ENCODE measurements at regions of chr13 and their contacts with region 1.

Region 1: DNA sequence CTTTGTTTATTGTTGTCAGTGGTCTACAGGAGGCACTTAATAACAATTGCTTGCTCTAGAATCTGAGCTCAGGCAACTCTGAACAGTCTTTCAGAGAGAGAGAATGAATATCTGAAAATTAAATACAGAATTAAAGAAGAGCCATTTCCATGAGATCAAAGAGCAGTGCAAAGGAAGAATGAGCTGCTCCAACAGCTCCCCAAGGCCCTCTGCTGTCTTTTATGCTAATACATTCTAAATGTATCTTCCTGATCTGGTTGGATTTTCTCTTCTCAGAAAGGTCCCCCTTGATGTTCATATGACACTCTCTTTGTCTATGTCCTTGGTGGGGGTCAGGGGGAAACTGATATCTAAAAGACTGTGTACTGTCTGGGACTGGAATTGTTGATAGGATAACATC is 1029.6 kb downstream of the PCDH9 start:
- DNase-seq: no peak
- ATAC-seq: peak; percentile 43
- H3K4me3 ChIP-seq: no peak overlapping the region
- H3K27ac ChIP-seq: no peak overlapping the region
- H3K4me1 ChIP-seq: no peaks in the 10 kb centered on the region
- H3K27me3 ChIP-seq: no peaks in the 10 kb centered on the region
- CTCF ChIP-seq: 0 out of 2 replicates have a peak, but pooled peaks have one; percentile 15

Region 2: GRCh38 chr13:65656740-65657329 is 543.7 kb before region 1 on chr13:
- CTCF ChIA-PET with region 1: no interaction called
- POLR2A ChIA-PET with region 1: no interaction called
- intact Hi-C with region 1: loop called (anchors 5 kb)
- DNase-seq: peak; percentile 37
- ATAC-seq: no peak
- H3K4me3 ChIP-seq: no peak overlapping the region
- H3K27ac ChIP-seq: no peak overlapping the region
- H3K4me1 ChIP-seq: no peaks in the 10 kb centered on the region
- H3K27me3 ChIP-seq: no peaks in the 10 kb centered on the region
- CTCF ChIP-seq: peak; percentile 65

Region 3: GRCh38 chr13:66048888-66049287 is 151.7 kb before region 1 on chr13:
- CTCF ChIA-PET with region 1: no interaction called
- POLR2A ChIA-PET with region 1: no interaction called
- intact Hi-C with region 1: no loop called
- DNase-seq: no peak
- ATAC-seq: no peak
- H3K4me3 ChIP-seq: no peak overlapping the region
- H3K27ac ChIP-seq: no peak overlapping the region
- H3K4me1 ChIP-seq: no peaks in the 10 kb centered on the region
- H3K27me3 ChIP-seq: no peaks in the 10 kb centered on the region
- CTCF ChIP-seq: no peak

Region 4: GRCh38 chr13:66128692-66129269 is 71.8 kb before region 1 on chr13:
- CTCF ChIA-PET with region 1: no interaction called
- POLR2A ChIA-PET with region 1: no interaction called
- intact Hi-C with region 1: no loop called
- DNase-seq: no peak
- ATAC-seq: no peak
- H3K4me3 ChIP-seq: no peak overlapping the region
- H3K27ac ChIP-seq: no peak overlapping the region
- H3K4me1 ChIP-seq: no peaks in the 10 kb centered on the region
- H3K27me3 ChIP-seq: no peaks in the 10 kb centered on the region
- CTCF ChIP-seq: no peak

Measured in PC-3 (cell line).